ENCODE measurements at regions of chr6 and their contacts with region 1.

Region 1: GRCh38 chr6:97186416-97186999 is 96.5 kb downstream of the MMS22L start:
- DNase-seq: peak; percentile 71
- H3K4me3 Mint-ChIP-seq: no peak overlapping the region
- H3K27ac Mint-ChIP-seq: no peak overlapping the region
- H3K4me1 Mint-ChIP-seq: no peaks in the 10 kb centered on the region
- H3K27me3 Mint-ChIP-seq: no peaks in the 10 kb centered on the region

Region 2: DNA sequence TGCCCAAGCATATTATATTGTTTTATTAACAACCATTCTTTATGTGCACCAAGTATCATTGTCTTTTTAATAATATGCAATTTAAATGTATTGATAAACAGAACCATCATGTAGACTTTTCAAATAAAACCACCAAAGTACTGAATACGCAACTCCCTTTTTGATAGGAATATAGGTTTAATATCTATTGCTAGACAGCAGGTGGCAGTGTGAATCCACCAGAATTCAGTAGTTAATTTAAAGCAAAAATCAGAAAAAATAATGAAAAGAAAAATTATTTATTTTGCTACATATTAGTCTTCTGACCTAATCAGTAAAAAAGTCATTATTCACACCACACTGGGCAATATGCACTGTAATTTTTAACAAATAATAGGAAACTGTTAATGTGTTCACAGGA is 118.3 kb before region 1 on chr6:
- CTCF ChIA-PET with region 1: no interaction called
- POLR2A ChIA-PET with region 1: no interaction called
- intact Hi-C with region 1: loop called (anchors 5 kb)
- DNase-seq: no peak
- H3K4me3 Mint-ChIP-seq: no peak overlapping the region
- H3K27ac Mint-ChIP-seq: no peak overlapping the region
- H3K4me1 Mint-ChIP-seq: no peaks in the 10 kb centered on the region
- H3K27me3 Mint-ChIP-seq: no peaks in the 10 kb centered on the region

Region 3: DNA sequence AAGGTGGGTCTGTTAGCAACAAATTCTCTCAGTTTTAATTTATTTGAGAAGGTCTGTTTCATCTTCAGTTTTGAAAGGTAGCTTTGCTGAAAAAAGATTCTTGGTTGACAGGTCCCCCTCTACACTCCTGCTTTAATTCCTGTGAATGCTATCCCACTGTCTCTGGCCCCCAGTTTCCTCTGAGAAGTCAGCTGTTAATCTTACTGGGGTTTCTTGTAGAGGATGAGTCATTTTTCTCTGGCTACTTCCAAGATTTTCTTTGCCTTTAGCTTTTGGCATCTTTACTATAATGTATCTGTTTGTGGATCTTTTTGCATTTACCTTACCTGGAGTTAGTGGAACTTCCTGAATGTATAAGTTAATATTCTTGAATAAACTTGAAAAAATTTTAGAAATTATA is 26.2 kb before region 1 on chr6:
- CTCF ChIA-PET with region 1: interaction called, 12 read pairs
- POLR2A ChIA-PET with region 1: no interaction called
- intact Hi-C with region 1: no loop called
- DNase-seq: no peak
- H3K4me3 Mint-ChIP-seq: no peak overlapping the region
- H3K27ac Mint-ChIP-seq: no peak overlapping the region
- H3K4me1 Mint-ChIP-seq: no peaks in the 10 kb centered on the region
- H3K27me3 Mint-ChIP-seq: no peaks in the 10 kb centered on the region

Region 4: DNA sequence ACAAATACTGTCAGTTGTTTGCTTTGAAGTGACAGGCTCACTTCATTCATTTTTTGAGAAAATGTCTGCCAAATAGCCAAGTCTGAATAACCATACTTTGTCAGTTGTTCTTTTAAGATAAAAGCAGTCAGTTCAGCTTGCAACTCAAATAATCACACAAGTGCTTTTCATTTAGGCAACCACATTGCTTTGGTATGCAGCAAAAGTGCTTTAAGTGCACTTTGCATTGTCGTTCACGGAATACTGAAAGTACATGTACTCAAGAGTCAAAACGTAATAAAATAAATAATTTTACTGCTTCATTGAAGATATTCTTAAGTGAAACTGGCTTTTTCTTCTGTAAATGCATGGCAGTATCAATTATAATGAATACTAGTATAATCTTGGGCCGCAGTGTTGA is 10.7 kb before region 1 on chr6:
- CTCF ChIA-PET with region 1: interaction called, 11 read pairs
- POLR2A ChIA-PET with region 1: no interaction called
- intact Hi-C with region 1: no loop called
- DNase-seq: no peak
- H3K4me3 Mint-ChIP-seq: no peak overlapping the region
- H3K27ac Mint-ChIP-seq: no peak overlapping the region
- H3K4me1 Mint-ChIP-seq: no peaks in the 10 kb centered on the region
- H3K27me3 Mint-ChIP-seq: no peaks in the 10 kb centered on the region

Region 5: DNA sequence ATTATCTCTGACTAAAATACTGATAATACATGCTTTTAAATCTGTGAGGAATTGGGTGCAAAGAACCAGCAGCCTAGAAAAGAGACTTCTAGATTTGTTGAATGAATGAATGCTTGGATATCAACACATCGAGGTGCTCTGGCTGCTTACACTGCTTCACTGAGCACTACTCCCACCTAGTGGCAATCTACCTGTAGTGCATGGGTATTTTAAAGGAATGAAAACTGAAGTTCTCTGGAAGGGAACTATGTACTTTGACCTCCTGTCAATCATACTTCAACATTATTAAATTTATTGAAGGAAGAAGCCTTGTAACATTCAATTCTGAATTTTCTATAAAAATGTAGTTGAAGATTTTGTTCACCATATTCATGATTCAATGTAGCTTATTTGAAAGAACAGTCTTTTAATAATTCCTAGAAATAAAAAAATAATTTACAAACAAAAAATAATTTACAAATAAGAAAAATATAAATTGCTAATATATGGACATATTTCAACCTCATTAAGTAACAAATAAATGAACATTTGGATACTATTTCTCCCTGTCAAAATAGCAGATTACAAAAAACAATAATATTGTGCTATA is 207.7 kb after region 1 on chr6:
- CTCF ChIA-PET with region 1: interaction called, 28 read pairs
- POLR2A ChIA-PET with region 1: no interaction called
- intact Hi-C with region 1: loop called (anchors 1 kb)
- DNase-seq: peak; percentile 34
- H3K4me3 Mint-ChIP-seq: no peak overlapping the region
- H3K27ac Mint-ChIP-seq: no peak overlapping the region
- H3K4me1 Mint-ChIP-seq: no peaks in the 10 kb centered on the region
- H3K27me3 Mint-ChIP-seq: peaks cover 9% of the 10 kb centered on the region

Measured in activated CD4-positive, alpha-beta memory T cell treated with anti-CD3 and anti-CD28 coated beads for 36 hours (primary cell).